IMR-90 (cell line): ENCODE measurements at regions of chr17 and their contacts with region 1.

Region 1: GRCh38 chr17:73074566-73074965 is 17.9 kb downstream of the SLC39A11 start:
- DNase-seq: no peak
- ATAC-seq: no peak
- H3K4me3 ChIP-seq: no peak overlapping the region
- H3K27ac ChIP-seq: no peak overlapping the region
- H3K4me1 ChIP-seq: peaks cover 20% of the 10 kb centered on the region
- H3K27me3 ChIP-seq: no peaks in the 10 kb centered on the region
- CTCF ChIP-seq: no peak
- POLR2A ChIP-seq: no peak
- RAD21 ChIP-seq: no peak

Region 2: DNA sequence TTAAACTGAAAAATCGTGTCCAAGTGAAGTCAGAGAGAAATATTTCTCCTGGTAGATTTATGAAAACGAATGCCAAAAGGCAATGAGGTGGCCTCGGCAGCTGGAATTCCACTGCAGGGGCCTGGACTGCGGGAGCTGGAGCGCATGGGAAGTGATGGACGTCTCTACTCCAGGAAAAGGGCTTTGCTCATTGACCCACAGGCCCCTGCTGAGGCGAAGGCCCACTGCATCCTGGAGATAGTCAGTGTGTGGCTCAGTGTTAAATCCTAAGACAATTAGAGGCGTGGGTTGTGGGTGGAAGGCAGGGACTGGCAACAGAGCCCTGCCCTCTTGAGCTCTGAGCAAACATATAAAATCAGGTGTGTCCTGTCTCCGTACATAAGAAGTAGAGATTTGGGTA is 173.5 kb before region 1 on chr17:
- CTCF ChIA-PET with region 1: no interaction called
- POLR2A ChIA-PET with region 1: interaction called, 19 read pairs
- dilution Hi-C with region 1: no loop called
- in situ Hi-C with region 1: no loop called
- intact Hi-C with region 1: no loop called
- DNase-seq: no peak
- ATAC-seq: no peak
- H3K4me3 ChIP-seq: no peak overlapping the region
- H3K27ac ChIP-seq: no peak overlapping the region
- H3K4me1 ChIP-seq: no peaks in the 10 kb centered on the region
- H3K27me3 ChIP-seq: no peaks in the 10 kb centered on the region
- CTCF ChIP-seq: no peak
- POLR2A ChIP-seq: no peak
- RAD21 ChIP-seq: no peak

Region 3: GRCh38 chr17:73007407-73007806 is 67.2 kb before region 1 on chr17:
- CTCF ChIA-PET with region 1: no interaction called
- POLR2A ChIA-PET with region 1: no interaction called
- dilution Hi-C with region 1: no loop called
- in situ Hi-C with region 1: no loop called
- intact Hi-C with region 1: no loop called
- DNase-seq: peak; percentile 80
- ATAC-seq: peak; percentile 67; the same call in 1 of the 2 replicates
- H3K4me3 ChIP-seq: no peak overlapping the region
- H3K27ac ChIP-seq: no peak overlapping the region
- H3K4me1 ChIP-seq: peaks cover 3% of the 10 kb centered on the region; the same call in 1 of the 2 replicates
- H3K27me3 ChIP-seq: no peaks in the 10 kb centered on the region
- CTCF ChIP-seq: no peak
- POLR2A ChIP-seq: no peak
- RAD21 ChIP-seq: no peak

Region 4: GRCh38 chr17:73030501-73030921 is 44.1 kb before region 1 on chr17:
- CTCF ChIA-PET with region 1: no interaction called
- POLR2A ChIA-PET with region 1: no interaction called
- dilution Hi-C with region 1: no loop called
- in situ Hi-C with region 1: no loop called
- intact Hi-C with region 1: no loop called
- DNase-seq: peak; percentile 24
- ATAC-seq: no peak
- H3K4me3 ChIP-seq: no peak overlapping the region
- H3K27ac ChIP-seq: no peak overlapping the region
- H3K4me1 ChIP-seq: peaks cover 11% of the 10 kb centered on the region
- H3K27me3 ChIP-seq: no peaks in the 10 kb centered on the region
- CTCF ChIP-seq: no peak
- POLR2A ChIP-seq: no peak
- RAD21 ChIP-seq: no peak

Region 5: DNA sequence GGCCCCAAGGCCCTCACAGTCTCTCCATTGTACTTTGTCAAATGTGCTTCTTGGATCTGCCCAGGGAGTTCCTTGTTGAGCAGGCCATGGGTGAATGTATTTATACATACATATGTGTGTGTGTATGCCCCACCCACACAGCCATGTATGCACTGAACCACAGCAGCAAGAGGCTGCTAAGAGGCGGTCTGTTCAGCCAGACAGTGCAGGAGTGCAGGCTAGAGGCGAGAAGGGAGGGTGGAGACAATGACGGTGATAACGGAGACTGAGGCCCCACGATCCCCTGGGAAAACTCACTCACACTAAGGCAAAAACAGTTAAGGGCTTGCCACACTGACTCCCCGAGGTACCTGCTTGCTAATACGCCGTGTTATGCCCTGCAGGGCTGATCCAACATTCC is 388.3 kb after region 1 on chr17:
- CTCF ChIA-PET with region 1: no interaction called
- POLR2A ChIA-PET with region 1: no interaction called
- dilution Hi-C with region 1: no loop called
- in situ Hi-C with region 1: no loop called
- intact Hi-C with region 1: no loop called
- DNase-seq: no peak
- ATAC-seq: no peak
- H3K4me3 ChIP-seq: no peak overlapping the region
- H3K27ac ChIP-seq: no peak overlapping the region
- H3K4me1 ChIP-seq: no peaks in the 10 kb centered on the region
- H3K27me3 ChIP-seq: no peaks in the 10 kb centered on the region
- CTCF ChIP-seq: no peak
- POLR2A ChIP-seq: no peak
- RAD21 ChIP-seq: no peak